Breast epithelium (tissue), 4 donors: ENCODE measurements at regions of chr18 and their contacts with region 1.

Region 1: DNA sequence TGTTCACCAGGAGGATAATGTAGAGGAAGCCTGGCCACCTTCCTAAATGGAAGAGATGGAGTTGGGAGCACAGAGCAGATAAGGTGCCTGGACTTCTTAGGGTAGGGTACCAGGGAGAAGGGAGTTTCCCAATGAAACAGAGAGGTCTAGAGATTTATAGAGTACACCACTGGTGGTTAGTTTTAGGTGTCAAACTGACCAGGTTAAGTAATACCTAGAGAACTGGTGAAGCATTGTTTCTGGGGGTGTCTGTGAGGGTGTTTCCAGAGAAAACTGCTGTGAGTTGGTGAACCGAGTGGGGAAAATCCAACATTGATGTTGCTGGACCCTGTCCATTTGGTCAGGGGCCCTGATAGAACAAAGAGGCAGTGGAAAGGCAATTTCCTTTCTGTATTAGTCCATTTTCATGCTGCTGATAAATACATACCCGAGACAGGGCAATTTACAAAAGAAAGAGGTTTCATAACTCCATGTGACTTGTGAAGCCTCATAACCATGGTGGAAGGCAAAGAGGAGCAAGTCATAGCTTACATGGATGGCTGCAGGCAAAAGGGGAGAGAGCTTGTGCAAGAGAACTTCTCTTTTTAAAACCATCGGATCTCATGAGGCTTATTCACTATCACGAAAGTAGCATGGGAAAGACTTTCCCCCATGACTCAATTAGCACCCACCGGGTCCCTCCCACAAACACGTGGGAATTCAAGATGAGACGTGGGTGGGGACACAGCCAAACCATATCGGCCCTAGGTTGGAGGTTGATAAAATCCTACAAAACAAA is 260.8 kb downstream of the CBLN2 start:
- DNase-seq: no peak
- H3K4me3 ChIP-seq: no peak overlapping the region
- H3K27ac ChIP-seq: no peak overlapping the region
- H3K4me1 ChIP-seq: no peaks in the 10 kb centered on the region
- H3K27me3 ChIP-seq: no peaks in the 10 kb centered on the region
- CTCF ChIP-seq: no peak
- POLR2A ChIP-seq: no peak

Region 2: GRCh38 chr18:71485611-71486010 is 797.7 kb before region 1 on chr18:
- intact Hi-C with region 1: loop called (anchors 5 kb)
- DNase-seq: no peak
- H3K4me3 ChIP-seq: no peak overlapping the region
- H3K27ac ChIP-seq: no peak overlapping the region
- H3K4me1 ChIP-seq: no peaks in the 10 kb centered on the region
- H3K27me3 ChIP-seq: no peaks in the 10 kb centered on the region
- CTCF ChIP-seq: no peak
- POLR2A ChIP-seq: no peak

Region 3: GRCh38 chr18:72316497-72316896 is 33.2 kb after region 1 on chr18:
- intact Hi-C with region 1: no loop called
- DNase-seq: no peak
- H3K4me3 ChIP-seq: no peak overlapping the region
- H3K27ac ChIP-seq: no peak overlapping the region
- H3K4me1 ChIP-seq: no peaks in the 10 kb centered on the region
- H3K27me3 ChIP-seq: no peaks in the 10 kb centered on the region
- CTCF ChIP-seq: no peak
- POLR2A ChIP-seq: no peak